ENCODE measurements at regions of chr3 and their contacts with region 1.

Region 1: DNA sequence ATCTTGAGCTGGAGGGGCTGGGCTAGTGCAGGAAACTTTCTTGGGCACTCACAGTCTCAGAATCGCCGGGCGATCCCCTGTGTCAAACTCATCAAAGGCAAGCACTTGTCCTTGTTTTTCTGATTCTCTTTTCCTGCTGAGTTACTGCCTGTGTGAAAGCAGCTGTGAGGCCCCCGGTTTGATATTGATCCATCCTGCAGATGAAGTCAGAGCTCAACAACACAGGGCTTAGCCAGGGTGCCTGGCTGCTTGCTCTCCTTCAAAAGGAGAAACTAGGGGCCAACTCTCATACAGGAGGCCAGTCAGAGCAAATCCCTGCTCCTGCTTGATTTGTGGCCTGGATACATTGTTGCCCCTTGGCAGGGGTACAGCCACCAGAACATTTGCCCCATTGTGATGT is 22.9 kb downstream of the CLSTN2 start:
- DNase-seq: no peak
- H3K4me3 ChIP-seq: no peak overlapping the region
- H3K27ac ChIP-seq: no peak overlapping the region
- H3K4me1 ChIP-seq: no peaks in the 10 kb centered on the region
- H3K27me3 ChIP-seq: no peaks in the 10 kb centered on the region
- CTCF ChIP-seq: no peak
- EP300 ChIP-seq: no peak
- POLR2A ChIP-seq: no peak

Region 2: GRCh38 chr3:138609898-138610266 is 1348.0 kb before region 1 on chr3:
- in situ Hi-C with region 1: no loop called
- intact Hi-C with region 1: loop called (anchors 5 kb)
- DNase-seq: no peak
- H3K4me3 ChIP-seq: peak overlapping the region in 3 of 4 donors; percentile 69 to 74 (median 72)
- H3K27ac ChIP-seq: peak overlapping the region; percentile 94 to 98 (median 96)
- H3K4me1 ChIP-seq: peaks cover 4 to 14% (median 9%) of the 10 kb centered on the region in 4 donors
- H3K27me3 ChIP-seq: no peaks in the 10 kb centered on the region
- CTCF ChIP-seq: no peak
- EP300 ChIP-seq: no peak
- POLR2A ChIP-seq: no peak

Region 3: GRCh38 chr3:140051019-140051957 is 93.4 kb after region 1 on chr3:
- in situ Hi-C with region 1: no loop called
- intact Hi-C with region 1: no loop called
- DNase-seq: no peak
- H3K4me3 ChIP-seq: no peak overlapping the region
- H3K27ac ChIP-seq: no peak overlapping the region
- H3K4me1 ChIP-seq: peaks cover 5 to 10% (median 8%) of the 10 kb centered on the region in 4 donors
- H3K27me3 ChIP-seq: no peaks in the 10 kb centered on the region
- CTCF ChIP-seq: peak in 1 of 5 experiments; percentile 11
- EP300 ChIP-seq: no peak
- POLR2A ChIP-seq: no peak